Activated CD4-positive, alpha-beta memory T cell treated with anti-CD3 and anti-CD28 coated beads, Interleukin-2, amount 10 ng/mL, durations not matched to agents 7 days and 5 days (primary cell): ENCODE measurements at regions of chr6 and their contacts with region 1.

Region 1: DNA sequence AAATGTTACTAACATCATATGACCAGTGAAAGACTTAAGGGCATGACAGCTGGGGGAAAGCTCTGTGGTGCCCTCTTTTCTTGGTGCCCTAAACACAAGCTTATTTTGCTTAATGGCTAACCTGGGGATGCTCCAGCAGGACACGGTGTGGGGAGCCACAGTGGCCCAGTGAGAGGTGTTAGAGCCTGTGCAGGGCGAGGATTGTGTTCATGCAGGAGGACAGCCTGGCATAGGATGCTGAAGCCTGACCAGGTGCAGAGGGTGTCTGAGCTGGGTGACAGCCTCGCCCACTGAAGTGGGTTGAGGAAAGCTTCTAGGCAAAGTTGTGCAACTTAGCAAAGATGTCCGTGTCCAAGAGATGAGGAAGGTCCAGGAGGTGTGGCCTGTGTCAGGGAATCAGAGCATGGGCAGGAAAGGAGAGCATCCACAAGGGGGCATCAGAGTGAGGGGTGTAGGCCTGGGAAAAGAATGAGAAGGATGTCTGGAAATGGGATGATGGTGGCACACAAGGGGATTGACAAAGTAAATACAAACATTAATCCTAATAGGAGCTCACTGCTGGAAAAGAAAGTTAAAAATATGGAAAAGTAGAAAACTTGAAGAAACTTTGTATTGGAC is 33.9 kb downstream of the SLC17A4 start:
- DNase-seq: peak; percentile 28
- H3K4me3 Mint-ChIP-seq: no peak overlapping the region
- H3K27ac Mint-ChIP-seq: no peak overlapping the region
- H3K4me1 Mint-ChIP-seq: peaks cover 14% of the 10 kb centered on the region
- H3K27me3 Mint-ChIP-seq: no peaks in the 10 kb centered on the region

Region 2: DNA sequence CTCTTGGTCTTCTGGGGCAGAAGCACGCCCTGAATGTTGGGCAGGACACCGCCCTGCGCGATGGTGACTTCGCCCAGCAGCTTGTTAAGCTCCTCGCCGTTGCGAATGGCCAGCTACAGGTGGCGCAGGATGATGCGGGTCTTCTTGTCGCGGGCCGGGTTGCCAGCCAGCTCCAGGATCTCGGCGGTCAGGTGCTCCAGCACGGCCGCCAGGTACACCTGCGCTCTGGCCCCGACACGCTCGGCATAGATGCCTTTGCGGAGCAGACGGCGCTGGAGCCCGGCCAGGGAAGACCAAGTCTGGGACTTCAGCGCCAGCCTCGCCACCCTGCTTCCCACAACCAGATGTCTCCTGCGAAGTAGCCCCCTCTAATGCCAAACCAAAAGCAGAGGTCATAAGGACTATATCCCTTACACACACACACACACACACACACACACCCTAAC is 93.7 kb after region 1 on chr6:
- CTCF ChIA-PET with region 1: interaction called, 15 read pairs
- POLR2A ChIA-PET with region 1: no interaction called
- DNase-seq: peak; percentile 38
- H3K4me3 Mint-ChIP-seq: peak overlapping the region; percentile 79
- H3K27ac Mint-ChIP-seq: peak overlapping the region; percentile 57
- H3K4me1 Mint-ChIP-seq: peaks cover 6% of the 10 kb centered on the region
- H3K27me3 Mint-ChIP-seq: no peaks in the 10 kb centered on the region

Region 3: GRCh38 chr6:26045065-26045927 is 256.9 kb after region 1 on chr6:
- CTCF ChIA-PET with region 1: no interaction called
- POLR2A ChIA-PET with region 1: no interaction called
- DNase-seq: peak; percentile 82
- H3K4me3 Mint-ChIP-seq: peak overlapping the region; percentile 79
- H3K27ac Mint-ChIP-seq: peak overlapping the region; percentile 99
- H3K4me1 Mint-ChIP-seq: peaks cover 44% of the 10 kb centered on the region
- H3K27me3 Mint-ChIP-seq: no peaks in the 10 kb centered on the region